Keratinocyte (primary cell): ENCODE measurements at regions of chr5 and their contacts with region 1.

Region 1: GRCh38 chr5:33491941-33492340 is 51.2 kb downstream of the TARS1 start:
- DNase-seq: no peak
- H3K4me3 ChIP-seq: no peak overlapping the region
- H3K27ac ChIP-seq: no peak overlapping the region
- H3K4me1 ChIP-seq: no peaks in the 10 kb centered on the region
- H3K27me3 ChIP-seq: no peaks in the 10 kb centered on the region
- CTCF ChIP-seq: no peak

Region 2: DNA sequence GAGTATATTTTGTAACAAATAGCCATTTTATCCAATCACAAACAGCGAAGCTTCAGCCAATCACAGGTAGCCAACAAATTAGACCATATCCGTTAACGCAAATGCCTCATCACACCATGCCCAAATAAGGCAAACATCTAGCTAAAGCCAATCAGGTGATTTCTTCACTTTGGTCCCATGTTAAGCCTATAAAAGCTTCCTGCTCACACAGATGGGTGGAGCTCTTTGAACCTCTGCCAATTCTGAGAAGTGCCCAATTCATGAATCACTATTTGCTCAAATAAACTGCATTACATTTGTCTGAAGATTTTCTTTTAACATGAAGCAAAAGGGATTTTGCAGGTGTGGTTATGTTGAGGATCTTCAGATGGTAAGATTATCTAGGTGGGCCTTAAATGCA is 178.8 kb before region 1 on chr5:
- dilution Hi-C with region 1: no loop called
- DNase-seq: peak; percentile 90
- H3K4me3 ChIP-seq: no peak overlapping the region
- H3K27ac ChIP-seq: peak overlapping the region; percentile 82
- H3K4me1 ChIP-seq: peaks cover 47% of the 10 kb centered on the region
- H3K27me3 ChIP-seq: no peaks in the 10 kb centered on the region
- CTCF ChIP-seq: no peak

Region 3: GRCh38 chr5:33936004-33936380 is 444.1 kb after region 1 on chr5:
- dilution Hi-C with region 1: loop called (anchors 25 kb)
- DNase-seq: no peak
- H3K4me3 ChIP-seq: peak overlapping the region in 2 of 3 experiments; percentile 1 to 4
- H3K27ac ChIP-seq: no peak overlapping the region
- H3K4me1 ChIP-seq: no peaks in the 10 kb centered on the region
- H3K27me3 ChIP-seq: peaks cover 37% of the 10 kb centered on the region
- CTCF ChIP-seq: no peak